ENCODE measurements at regions of chr11 and their contacts with region 1.

Region 1: GRCh38 chr11:119084663-119085436 is at the start of gene HMBS:
- DNase-seq: peak; percentile 98
- H3K4me3 Mint-ChIP-seq: peak within 1 kb of the TSS; percentile 97
- H3K27ac Mint-ChIP-seq: peak within 1 kb of the TSS; percentile 95
- H3K4me1 Mint-ChIP-seq: peaks cover 24% of the 10 kb centered on the region
- H3K27me3 Mint-ChIP-seq: no peaks in the 10 kb centered on the region
- total RNA-seq, gene HMBS: 60.9 and 62.8 TPM in 2 replicates

Region 2: GRCh38 chr11:119121008-119121810 is 36.4 kb after region 1 on chr11 and contains the start of gene HINFP:
- intact Hi-C with region 1: loop called (anchors 1 kb)
- DNase-seq: peak; percentile 100
- H3K4me3 Mint-ChIP-seq: peak within 1 kb of the TSS; percentile 98
- H3K27ac Mint-ChIP-seq: peak within 1 kb of the TSS; percentile 89
- H3K4me1 Mint-ChIP-seq: peaks cover 26% of the 10 kb centered on the region
- H3K27me3 Mint-ChIP-seq: no peaks in the 10 kb centered on the region
- total RNA-seq, gene HINFP: 34.9 and 41.4 TPM in 2 replicates

Region 3: DNA sequence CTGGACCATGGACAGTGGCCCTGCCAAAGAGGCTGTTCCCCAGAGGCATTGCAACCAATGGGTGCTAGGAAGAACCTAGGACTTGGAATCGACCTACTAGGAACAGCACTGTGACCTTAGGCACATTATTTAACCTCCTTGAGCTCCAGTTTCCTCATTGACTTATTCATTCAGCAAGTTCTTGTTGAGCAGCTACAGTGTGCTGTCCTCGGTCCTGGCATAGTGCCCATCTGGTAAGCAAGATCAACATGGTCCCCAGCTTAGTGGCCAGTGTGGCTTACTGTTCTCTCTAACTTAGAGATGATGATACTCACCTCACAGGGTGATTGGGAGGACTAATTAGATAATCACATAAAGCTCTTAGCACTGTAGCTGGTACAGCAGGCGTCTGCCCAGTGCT is 72.2 kb after region 1 on chr11:
- intact Hi-C with region 1: no loop called
- DNase-seq: no peak
- H3K4me3 Mint-ChIP-seq: no peak overlapping the region
- H3K27ac Mint-ChIP-seq: no peak overlapping the region
- H3K4me1 Mint-ChIP-seq: peaks cover 3% of the 10 kb centered on the region
- H3K27me3 Mint-ChIP-seq: peaks cover 22% of the 10 kb centered on the region

Region 4: DNA sequence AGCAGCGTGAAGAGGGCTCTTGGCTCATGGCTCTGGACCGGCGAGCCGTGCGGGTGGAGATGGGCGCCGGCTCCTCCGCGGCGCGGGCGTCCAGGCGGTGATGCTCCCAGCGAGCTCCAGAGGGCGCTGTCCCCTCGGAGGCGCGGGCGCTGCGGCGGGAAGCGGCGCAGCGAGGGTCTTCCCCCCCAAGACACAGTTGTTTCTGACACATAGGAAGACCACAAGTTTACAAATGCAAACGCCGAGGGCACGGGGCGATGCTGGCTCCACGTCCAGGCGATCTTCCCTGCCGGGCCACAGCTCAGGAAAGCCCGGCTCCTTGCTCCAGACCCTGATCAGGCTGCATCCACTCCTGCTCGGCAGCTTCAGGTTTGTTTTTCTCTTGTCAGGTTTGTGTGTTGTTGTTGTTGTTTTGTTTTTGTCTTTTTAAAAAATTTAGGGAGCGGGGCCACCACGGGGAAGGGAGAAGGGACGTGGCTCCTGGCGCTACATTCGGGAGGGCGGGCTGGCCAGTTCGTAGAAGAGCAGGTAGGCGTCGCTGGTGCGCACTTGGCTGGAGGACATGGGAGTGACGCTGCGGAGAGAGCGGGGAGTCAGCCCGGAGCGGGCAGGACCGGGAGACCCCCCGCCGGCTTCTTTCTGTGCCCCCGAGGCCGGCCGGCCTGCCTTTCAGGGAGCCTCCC is 271.6 kb after region 1 on chr11:
- intact Hi-C with region 1: no loop called
- DNase-seq: peak; percentile 92
- H3K4me3 Mint-ChIP-seq: peak overlapping the region; percentile 87
- H3K27ac Mint-ChIP-seq: peak overlapping the region; percentile 76
- H3K4me1 Mint-ChIP-seq: peaks cover 5% of the 10 kb centered on the region
- H3K27me3 Mint-ChIP-seq: peaks cover 39% of the 10 kb centered on the region